Activated T-helper 1 cell treated with anti-CD3 and anti-CD28 coated beads, Interleukin-12 subunit alpha, Interleukin-12 subunit beta, Interleukin-2, Interleukin-4 antibody, amounts not matched to agents 30 ng/mL and 10 ng/mL and 1 ng/mL, durations not matched to agents 14 hours and 24 hours and 36 hours (primary cell): ENCODE measurements at regions of chr3 and their contacts with region 1.

Region 1: GRCh38 chr3:133040696-133041523 is 2.7 kb downstream of the TMEM108 start:
- DNase-seq: no peak
- H3K4me3 Mint-ChIP-seq: no peak overlapping the region
- H3K27ac Mint-ChIP-seq: no peak overlapping the region
- H3K4me1 Mint-ChIP-seq: peaks cover 5% of the 10 kb centered on the region
- H3K27me3 Mint-ChIP-seq: peaks cover 43% of the 10 kb centered on the region

Region 2: GRCh38 chr3:133023362-133023761 is 17.5 kb before region 1 on chr3:
- intact Hi-C with region 1: no loop called
- DNase-seq: no peak
- H3K4me3 Mint-ChIP-seq: no peak overlapping the region
- H3K27ac Mint-ChIP-seq: no peak overlapping the region
- H3K4me1 Mint-ChIP-seq: no peaks in the 10 kb centered on the region
- H3K27me3 Mint-ChIP-seq: no peaks in the 10 kb centered on the region

Region 3: DNA sequence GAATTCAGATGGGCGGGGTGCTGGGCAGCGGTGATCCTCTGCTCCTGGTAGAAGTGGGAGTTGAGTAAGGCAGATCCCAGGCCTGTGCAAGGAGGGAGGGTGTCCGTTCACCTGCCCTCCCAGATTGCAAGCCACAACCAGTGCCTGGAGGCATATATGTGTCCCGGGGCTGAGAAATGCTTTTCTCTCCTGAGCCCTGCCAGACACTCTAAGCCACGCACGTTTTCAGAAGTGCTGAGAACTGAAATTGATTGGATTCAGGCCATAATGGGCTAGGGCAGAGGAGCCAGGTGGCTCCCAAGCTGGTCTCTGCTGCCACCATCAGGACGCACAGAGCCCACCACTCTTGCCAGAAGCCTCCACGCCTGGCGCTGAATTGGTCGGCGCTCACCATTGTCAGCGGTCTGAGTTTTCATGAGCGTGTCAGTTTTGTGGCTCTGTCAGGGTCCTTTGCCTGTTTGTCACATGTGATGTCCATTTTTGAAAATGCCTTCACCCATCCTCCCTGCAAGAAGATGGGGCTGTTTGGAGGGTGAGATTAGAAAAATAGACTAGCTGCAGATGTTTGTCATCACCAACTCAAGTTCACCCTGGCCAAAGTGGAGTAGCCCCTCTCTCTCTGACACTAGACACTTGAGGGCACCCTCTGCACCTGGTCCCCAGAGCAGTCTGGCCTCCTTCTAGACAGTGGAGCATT is 343.6 kb after region 1 on chr3:
- intact Hi-C with region 1: loop called (anchors 5 kb)
- DNase-seq: no peak
- H3K4me3 Mint-ChIP-seq: no peak overlapping the region
- H3K27ac Mint-ChIP-seq: no peak overlapping the region
- H3K4me1 Mint-ChIP-seq: no peaks in the 10 kb centered on the region
- H3K27me3 Mint-ChIP-seq: no peaks in the 10 kb centered on the region

Region 4: GRCh38 chr3:133674290-133674919 is 633.5 kb after region 1 on chr3:
- intact Hi-C with region 1: no loop called
- DNase-seq: no peak
- H3K4me3 Mint-ChIP-seq: no peak overlapping the region
- H3K27ac Mint-ChIP-seq: no peak overlapping the region
- H3K4me1 Mint-ChIP-seq: no peaks in the 10 kb centered on the region
- H3K27me3 Mint-ChIP-seq: peaks cover 60% of the 10 kb centered on the region